Activated CD4-positive, alpha-beta memory T cell treated with anti-CD3 and anti-CD28 coated beads, Interleukin-2, amount 10 ng/mL, durations not matched to agents 7 days and 5 days (primary cell): ENCODE measurements at regions of chr3 and their contacts with region 1.

Region 1: DNA sequence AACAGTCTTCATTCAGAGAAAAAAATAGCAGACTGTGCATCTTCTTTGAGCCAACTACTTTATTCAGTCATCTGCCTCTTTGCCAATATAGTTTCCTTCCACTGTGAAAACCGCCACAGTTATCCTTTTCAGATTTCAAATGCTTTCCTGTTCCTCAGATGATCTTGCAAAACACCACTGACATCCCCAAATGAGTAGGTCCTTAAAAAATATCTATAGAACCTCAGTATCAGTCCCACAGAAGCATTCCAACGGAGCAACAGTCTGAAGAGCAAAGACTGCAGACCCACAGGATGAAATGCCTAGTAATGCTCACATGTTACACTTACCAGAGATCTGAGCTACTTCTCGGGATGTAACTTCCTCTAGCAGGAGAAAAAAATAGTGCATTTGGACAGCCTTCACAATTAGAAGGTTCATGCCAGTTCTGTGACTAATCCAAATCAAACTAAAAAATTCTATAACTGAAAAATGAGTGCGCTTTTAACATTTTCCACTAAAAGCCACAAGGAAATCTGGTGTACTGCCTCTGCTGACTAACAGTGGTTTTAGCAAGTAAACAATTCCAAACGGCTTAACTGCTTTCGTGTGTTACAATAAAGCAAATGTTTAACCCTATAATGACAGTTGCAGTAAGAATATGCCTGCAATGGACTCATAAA is at the start of gene ANKRD28:
- DNase-seq: no peak
- H3K4me3 Mint-ChIP-seq: peak within 1 kb of the TSS; percentile 82
- H3K27ac Mint-ChIP-seq: peak within 1 kb of the TSS; percentile 97
- H3K4me1 Mint-ChIP-seq: peaks cover 79% of the 10 kb centered on the region
- H3K27me3 Mint-ChIP-seq: no peaks in the 10 kb centered on the region
- total RNA-seq, gene ANKRD28: 56.5 to 56.6 TPM

Region 2: GRCh38 chr3:15601397-15602145 is 196.2 kb before region 1 on chr3 and contains the starts of genes BTD and HACL1:
- CTCF ChIA-PET with region 1: no interaction called
- POLR2A ChIA-PET with region 1: interaction called, 12 read pairs
- DNase-seq: peak; percentile 98
- H3K4me3 Mint-ChIP-seq: peak within 1 kb of the TSS; percentile 100
- H3K27ac Mint-ChIP-seq: peak within 1 kb of the TSS; percentile 99
- H3K4me1 Mint-ChIP-seq: peaks cover 41% of the 10 kb centered on the region
- H3K27me3 Mint-ChIP-seq: no peaks in the 10 kb centered on the region
- total RNA-seq, gene BTD: 11.7 to 12.7 TPM
- total RNA-seq, gene HACL1: 25.8 to 29.1 TPM

Region 3: DNA sequence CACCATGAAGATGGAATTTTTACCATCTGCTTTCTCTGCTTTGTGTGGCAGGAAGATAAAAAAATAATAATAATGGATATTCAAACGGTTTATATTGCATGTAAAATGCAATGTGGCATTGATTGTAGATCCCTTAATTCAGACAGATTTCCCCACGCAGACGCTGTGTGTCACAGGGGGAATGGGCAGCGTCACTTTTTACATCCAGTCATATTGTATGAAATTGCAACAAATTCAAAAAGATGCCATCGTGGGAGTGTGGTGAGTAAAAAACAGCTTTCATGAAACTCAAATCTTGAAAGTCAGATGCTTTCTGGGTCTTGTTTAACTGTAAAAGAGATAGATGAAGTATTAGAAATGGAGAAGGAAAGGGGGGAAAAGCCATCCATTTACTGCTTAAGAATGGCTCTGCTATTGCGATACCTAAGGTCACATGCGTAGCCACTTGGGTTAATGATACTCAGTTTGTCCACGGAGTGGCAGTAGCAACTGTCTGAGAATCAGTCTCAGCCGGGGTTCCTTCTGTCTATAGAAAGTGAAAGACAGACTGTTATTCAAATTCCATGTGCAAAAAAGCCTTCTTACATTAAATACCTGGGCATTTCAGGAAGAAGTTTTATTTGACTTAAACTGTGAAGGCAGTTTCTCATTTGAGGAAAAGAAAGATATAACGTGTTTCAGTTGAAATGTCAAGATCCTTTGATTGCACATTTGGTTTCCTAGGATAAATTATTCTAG is 167.7 kb before region 1 on chr3:
- CTCF ChIA-PET with region 1: interaction called, 10 read pairs
- POLR2A ChIA-PET with region 1: interaction called, 4 read pairs
- DNase-seq: peak; percentile 76
- H3K4me3 Mint-ChIP-seq: no peak overlapping the region
- H3K27ac Mint-ChIP-seq: no peak overlapping the region
- H3K4me1 Mint-ChIP-seq: peaks cover 32% of the 10 kb centered on the region
- H3K27me3 Mint-ChIP-seq: no peaks in the 10 kb centered on the region

Region 4: DNA sequence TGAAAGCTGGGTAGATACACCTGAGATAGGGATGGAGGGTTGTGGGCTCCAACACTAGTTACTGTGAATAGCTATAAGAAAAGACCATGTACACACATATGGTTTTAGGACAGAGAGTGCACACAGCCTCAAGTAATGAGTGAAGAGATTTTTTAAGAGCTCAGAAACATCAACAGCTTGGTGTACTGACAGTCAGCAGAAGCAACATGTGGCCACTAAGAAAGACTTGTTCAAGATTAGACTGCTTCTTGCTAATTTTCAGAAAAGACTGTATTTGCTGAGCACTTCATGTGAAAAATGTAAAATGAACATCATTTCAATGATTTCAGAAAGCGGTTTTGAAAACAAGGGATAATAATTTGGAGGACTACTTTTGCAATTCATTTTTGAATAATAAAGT is 10.2 kb before region 1 on chr3:
- CTCF ChIA-PET with region 1: no interaction called
- POLR2A ChIA-PET with region 1: interaction called, 10 read pairs
- DNase-seq: no peak
- H3K4me3 Mint-ChIP-seq: no peak overlapping the region
- H3K27ac Mint-ChIP-seq: no peak overlapping the region
- H3K4me1 Mint-ChIP-seq: peaks cover 36% of the 10 kb centered on the region
- H3K27me3 Mint-ChIP-seq: no peaks in the 10 kb centered on the region

Region 5: GRCh38 chr3:15812183-15812582 is 14.4 kb after region 1 on chr3:
- CTCF ChIA-PET with region 1: interaction called, 26 read pairs
- POLR2A ChIA-PET with region 1: interaction called, 23 read pairs
- DNase-seq: no peak
- H3K4me3 Mint-ChIP-seq: no peak overlapping the region
- H3K27ac Mint-ChIP-seq: no peak overlapping the region
- H3K4me1 Mint-ChIP-seq: peaks cover 48% of the 10 kb centered on the region
- H3K27me3 Mint-ChIP-seq: no peaks in the 10 kb centered on the region